ENCODE measurements at regions of chr11 and their contacts with region 1.

Region 1: GRCh38 chr11:44727373-44728287 is 868 bp downstream of the TSPAN18 start:
- DNase-seq: peak; percentile 82
- H3K4me3 ChIP-seq: peak overlapping the region; percentile 66
- H3K27ac ChIP-seq: no peak overlapping the region
- H3K4me1 ChIP-seq: no peaks in the 10 kb centered on the region
- H3K27me3 ChIP-seq: peaks cover 54% of the 10 kb centered on the region

Region 2: GRCh38 chr11:44893846-44894617 is 166.4 kb after region 1 on chr11:
- in situ Hi-C with region 1: loop called (anchors 5 kb)
- DNase-seq: peak; percentile 80
- H3K4me3 ChIP-seq: no peak overlapping the region
- H3K27ac ChIP-seq: no peak overlapping the region
- H3K4me1 ChIP-seq: 0 out of 2 replicates have a peak, but pooled peaks cover under 1% of the 10 kb centered on the region
- H3K27me3 ChIP-seq: peaks cover 33% of the 10 kb centered on the region

Measured in GM23248 (cell line).